ENCODE measurements at regions of chr7 and their contacts with region 1.

Region 1: DNA sequence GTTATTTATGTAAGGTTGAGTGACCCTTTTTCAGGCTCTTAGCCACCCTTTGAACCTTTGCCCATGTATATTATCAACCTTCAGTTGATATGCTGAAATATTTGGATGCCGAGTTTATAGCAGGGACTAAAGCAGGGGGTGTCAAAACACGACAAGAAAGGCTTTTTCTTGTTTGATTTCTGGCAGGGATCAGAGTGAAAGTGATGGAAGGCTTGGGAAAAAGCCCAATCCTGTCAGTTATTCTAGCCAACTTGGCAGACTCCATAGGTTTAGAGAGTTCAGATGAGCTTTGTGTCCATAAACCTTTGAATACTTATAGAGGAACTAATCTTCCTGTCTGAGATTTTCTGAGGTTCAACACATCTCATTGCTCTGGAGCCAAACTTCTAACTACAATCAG is 47.5 kb downstream of the INHBA start:
- DNase-seq: no peak
- ATAC-seq: no peak

Region 2: DNA sequence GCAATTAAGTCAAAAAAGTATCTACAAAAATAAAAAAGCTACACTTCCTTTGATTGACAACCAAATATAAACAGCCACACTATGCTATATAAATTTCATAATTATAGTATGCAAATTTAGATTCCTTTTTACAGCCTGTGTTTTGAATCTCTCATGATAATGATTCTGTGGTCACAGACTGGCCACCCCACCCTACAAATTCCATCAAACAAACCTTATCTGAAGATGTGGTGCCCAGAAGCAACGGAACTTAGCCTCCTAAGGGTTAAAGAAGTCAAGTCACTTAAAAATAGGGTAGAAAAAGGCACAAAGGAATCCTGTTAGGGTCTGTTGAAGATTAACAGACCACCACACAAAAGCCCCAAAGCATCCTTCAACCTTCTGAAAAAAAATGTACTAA is 304.3 kb before region 1 on chr7:
- intact Hi-C with region 1: loop called (anchors 2 kb)
- DNase-seq: no peak
- ATAC-seq: no peak